MCF 10A (cell line): ENCODE measurements at regions of chr17 and their contacts with region 1.

Region 1: DNA sequence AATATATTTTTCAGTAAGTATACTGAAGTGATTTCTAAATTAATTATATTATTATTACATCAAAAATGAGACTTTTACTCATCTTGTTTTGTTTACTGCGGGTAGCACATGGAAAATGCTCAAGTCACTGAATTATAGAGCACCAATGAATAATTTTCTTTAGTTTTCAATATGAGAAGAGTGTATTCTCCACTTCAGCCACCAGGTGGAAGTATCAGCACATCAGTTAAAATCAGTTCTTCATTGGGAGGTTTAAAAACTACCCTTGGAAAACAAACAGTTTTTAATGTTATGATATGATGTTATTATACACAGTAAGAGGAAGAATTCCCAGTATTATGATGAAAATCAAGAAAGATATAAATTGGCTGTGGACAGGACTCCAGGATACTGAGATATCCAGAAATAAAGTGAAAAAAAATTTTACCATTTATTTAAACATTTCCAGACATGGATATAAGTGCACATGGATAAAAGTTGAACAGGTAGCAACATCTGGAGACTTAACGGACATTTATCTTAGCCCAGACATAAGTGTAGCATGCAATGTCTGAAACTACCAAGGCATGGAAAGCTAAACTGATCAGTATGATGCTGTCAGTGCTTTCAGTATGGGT is 467.3 kb downstream of the KCNJ2 start:
- DNase-seq: peak; percentile 63
- H3K4me3 Mint-ChIP-seq: no peak overlapping the region
- H3K27ac Mint-ChIP-seq: no peak overlapping the region
- H3K4me1 Mint-ChIP-seq: no peaks in the 10 kb centered on the region
- H3K27me3 Mint-ChIP-seq: peaks cover 61% of the 10 kb centered on the region
- CTCF ChIP-seq: peak; percentile 71

Region 2: DNA sequence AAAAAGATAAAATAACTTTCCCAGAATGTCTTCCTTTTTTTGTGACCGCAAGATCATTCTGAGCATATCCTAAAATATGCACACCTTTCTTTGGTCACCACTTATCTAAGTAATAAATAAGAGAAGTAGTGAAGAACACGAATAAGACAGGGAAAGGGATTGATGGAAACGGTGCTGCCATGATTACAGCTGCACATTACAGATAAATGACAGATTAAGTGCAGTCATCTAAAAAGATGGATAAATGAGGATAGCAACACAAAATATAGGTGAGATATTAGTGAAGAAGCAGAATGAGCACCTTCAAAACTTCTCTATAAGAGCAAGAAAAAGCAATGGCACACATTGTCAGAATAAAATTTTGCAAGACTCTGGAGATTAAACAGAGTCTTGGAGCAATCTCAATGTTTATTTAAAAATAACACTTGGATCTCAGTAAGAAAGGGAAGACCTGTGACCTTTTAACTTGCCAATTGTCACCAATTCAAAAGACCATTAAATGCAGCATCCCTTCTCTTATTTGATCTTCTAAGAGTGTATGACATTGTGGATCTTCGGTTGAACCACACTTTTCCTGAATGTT is 99.8 kb after region 1 on chr17:
- CTCF ChIA-PET with region 1: no interaction called
- POLR2A ChIA-PET with region 1: no interaction called
- intact Hi-C with region 1: no loop called
- DNase-seq: no peak
- H3K4me3 Mint-ChIP-seq: no peak overlapping the region
- H3K27ac Mint-ChIP-seq: no peak overlapping the region
- H3K4me1 Mint-ChIP-seq: no peaks in the 10 kb centered on the region
- H3K27me3 Mint-ChIP-seq: peaks cover 83% of the 10 kb centered on the region
- CTCF ChIP-seq: no peak

Region 3: DNA sequence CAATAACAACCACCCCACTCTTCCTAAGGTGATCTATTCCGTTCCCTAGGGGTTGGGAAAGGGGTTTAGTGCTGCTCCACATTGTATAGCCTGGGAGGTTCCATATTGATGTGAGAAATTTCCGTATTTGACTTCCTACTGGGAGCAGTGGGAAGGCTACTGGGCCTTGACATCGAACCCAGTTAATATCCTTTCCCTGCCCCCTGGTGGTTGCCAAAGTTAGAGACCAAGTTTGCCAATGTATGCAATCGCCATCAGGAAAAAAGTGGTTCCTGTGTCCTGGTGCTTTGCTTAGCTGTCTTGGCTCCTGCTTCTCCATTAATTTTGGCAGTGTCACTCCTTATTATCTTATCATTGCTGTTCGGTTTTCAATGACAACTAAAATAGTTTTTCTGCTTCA is 447.6 kb after region 1 on chr17:
- CTCF ChIA-PET with region 1: no interaction called
- POLR2A ChIA-PET with region 1: no interaction called
- intact Hi-C with region 1: loop called (anchors 1 kb)
- DNase-seq: peak; percentile 76
- H3K4me3 Mint-ChIP-seq: no peak overlapping the region
- H3K27ac Mint-ChIP-seq: no peak overlapping the region
- H3K4me1 Mint-ChIP-seq: no peaks in the 10 kb centered on the region
- H3K27me3 Mint-ChIP-seq: no peaks in the 10 kb centered on the region
- CTCF ChIP-seq: peak; percentile 55

Region 4: GRCh38 chr17:71237903-71238538 is 601.4 kb after region 1 on chr17:
- CTCF ChIA-PET with region 1: no interaction called
- POLR2A ChIA-PET with region 1: no interaction called
- intact Hi-C with region 1: loop called (anchors 5 kb)
- DNase-seq: peak; percentile 63
- H3K4me3 Mint-ChIP-seq: no peak overlapping the region
- H3K27ac Mint-ChIP-seq: no peak overlapping the region
- H3K4me1 Mint-ChIP-seq: no peaks in the 10 kb centered on the region
- H3K27me3 Mint-ChIP-seq: no peaks in the 10 kb centered on the region
- CTCF ChIP-seq: peak; percentile 56

Region 5: DNA sequence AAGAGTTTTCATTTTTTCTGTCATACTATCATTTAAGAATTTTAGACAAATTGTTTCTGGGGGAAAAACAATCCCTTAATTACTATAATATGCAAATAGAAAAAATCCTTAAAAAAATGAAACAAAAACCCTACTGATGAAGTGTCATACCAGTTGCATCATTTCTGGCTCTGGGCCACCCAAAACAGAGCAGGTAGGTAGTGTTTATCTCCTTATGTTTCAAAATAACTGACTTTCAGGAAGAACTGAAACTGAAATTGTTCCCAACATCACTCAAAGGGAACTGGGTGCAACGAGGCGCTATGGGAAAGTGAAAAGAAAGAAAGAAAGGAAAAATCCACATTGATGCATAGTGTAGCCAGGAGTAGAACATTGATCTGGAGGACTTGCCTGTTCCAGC is 831.1 kb after region 1 on chr17:
- CTCF ChIA-PET with region 1: no interaction called
- POLR2A ChIA-PET with region 1: no interaction called
- intact Hi-C with region 1: loop called (anchors 2 kb)
- DNase-seq: peak; percentile 83
- H3K4me3 Mint-ChIP-seq: peak overlapping the region; percentile 38
- H3K27ac Mint-ChIP-seq: peak overlapping the region; percentile 9
- H3K4me1 Mint-ChIP-seq: peaks cover 23% of the 10 kb centered on the region
- H3K27me3 Mint-ChIP-seq: no peaks in the 10 kb centered on the region
- CTCF ChIP-seq: no peak